ENCODE measurements at regions of chr3 and their contacts with region 1.

Region 1: DNA sequence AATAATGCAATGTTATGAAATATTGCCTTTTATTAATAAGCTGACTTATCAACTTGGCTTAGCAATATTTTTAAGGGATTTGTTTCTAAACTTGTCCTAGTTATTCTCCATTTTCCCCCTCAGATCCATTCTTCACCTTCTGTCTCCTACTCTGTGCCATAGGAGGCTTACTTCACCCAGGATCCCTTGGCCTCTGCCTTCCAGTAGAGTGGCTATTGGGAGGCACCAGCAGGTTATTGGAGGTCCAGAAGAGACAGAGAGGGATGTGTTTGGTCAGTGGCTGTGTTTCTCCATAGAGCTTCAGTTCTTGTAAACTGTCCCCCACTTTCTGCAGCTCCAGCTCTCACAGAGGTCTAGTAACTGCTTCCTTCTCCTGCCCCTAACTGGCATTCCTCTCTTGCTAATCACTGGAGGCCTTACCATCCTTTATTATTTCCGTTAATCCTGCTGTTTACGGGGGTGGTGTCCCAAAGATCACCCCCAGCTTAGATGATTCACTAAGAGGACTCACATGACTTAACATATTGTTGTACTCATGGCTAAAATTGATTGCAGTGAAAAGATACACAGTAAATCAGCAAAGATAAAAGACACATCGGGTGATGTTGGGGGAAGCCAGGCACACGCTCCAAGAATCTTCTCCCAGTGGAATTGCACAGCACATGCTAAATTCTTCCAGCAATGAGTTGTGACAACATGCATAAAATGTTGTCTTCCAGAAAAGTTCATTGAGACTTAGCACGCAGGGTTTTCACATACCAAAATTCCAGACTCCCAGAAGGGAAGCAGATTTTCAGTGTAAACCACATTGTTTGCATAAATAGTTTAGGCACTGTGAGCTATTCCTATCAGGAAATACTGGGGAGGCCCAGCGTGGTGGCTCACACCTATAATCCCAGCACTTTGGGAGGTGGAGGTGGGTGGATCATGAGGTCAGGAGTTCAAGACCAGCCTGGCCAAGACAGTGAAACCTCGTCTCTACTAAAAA is 67.5 kb downstream of the RPL22L1 start:
- DNase-seq: peak; percentile 95
- H3K4me3 ChIP-seq: no peak overlapping the region
- H3K27ac ChIP-seq: peak overlapping the region; percentile 91
- H3K27me3 ChIP-seq: no peaks in the 10 kb centered on the region
- CTCF ChIP-seq: no peak

Region 2: GRCh38 chr3:170622369-170623159 is 179.9 kb before region 1 on chr3:
- CTCF ChIA-PET with region 1: interaction called, 3 read pairs
- POLR2A ChIA-PET with region 1: interaction called, 11 read pairs
- DNase-seq: peak; percentile 98
- H3K4me3 ChIP-seq: no peak overlapping the region
- H3K27ac ChIP-seq: peak overlapping the region; percentile 86
- H3K27me3 ChIP-seq: no peaks in the 10 kb centered on the region
- CTCF ChIP-seq: no peak

Region 3: GRCh38 chr3:170726976-170727661 is 75.3 kb before region 1 on chr3:
- CTCF ChIA-PET with region 1: interaction called, 3 read pairs
- POLR2A ChIA-PET with region 1: interaction called, 30 read pairs
- DNase-seq: no peak
- H3K4me3 ChIP-seq: peak overlapping the region; percentile 36
- H3K27ac ChIP-seq: peak overlapping the region; percentile 99
- H3K27me3 ChIP-seq: no peaks in the 10 kb centered on the region
- CTCF ChIP-seq: no peak

Region 4: GRCh38 chr3:170751083-170751898 is 51.2 kb before region 1 on chr3:
- CTCF ChIA-PET with region 1: interaction called, 3 read pairs
- POLR2A ChIA-PET with region 1: interaction called, 32 read pairs
- DNase-seq: peak; percentile 63
- H3K4me3 ChIP-seq: no peak overlapping the region
- H3K27ac ChIP-seq: peak overlapping the region; percentile 91
- H3K27me3 ChIP-seq: no peaks in the 10 kb centered on the region
- CTCF ChIP-seq: no peak

Region 5: GRCh38 chr3:171095063-171095462 is 292.6 kb after region 1 on chr3:
- CTCF ChIA-PET with region 1: no interaction called
- POLR2A ChIA-PET with region 1: no interaction called
- DNase-seq: no peak
- H3K4me3 ChIP-seq: no peak overlapping the region
- H3K27ac ChIP-seq: no peak overlapping the region
- H3K27me3 ChIP-seq: no peaks in the 10 kb centered on the region
- CTCF ChIP-seq: no peak